Calu3 (cell line): ENCODE measurements at regions of chr20 and their contacts with region 1.

Region 1: DNA sequence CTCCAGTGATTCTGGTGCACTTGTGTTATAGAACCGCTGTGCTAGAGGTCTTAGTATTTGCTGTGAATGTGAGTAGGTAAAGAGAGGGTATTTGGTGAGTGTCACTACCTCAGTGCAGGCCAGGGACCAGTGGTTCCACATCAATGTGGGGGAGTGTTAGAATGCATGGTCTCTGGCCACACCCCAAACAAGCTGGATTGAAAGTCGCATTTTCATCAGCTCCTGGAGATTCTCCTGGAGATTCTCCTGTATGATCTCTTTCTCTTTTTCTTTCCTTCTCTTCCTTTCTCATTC is 26.8 kb upstream of the BCAS1 start:
- DNase-seq: no peak
- H3K4me3 Mint-ChIP-seq: no peak overlapping the region
- H3K27ac Mint-ChIP-seq: no peak overlapping the region
- H3K4me1 Mint-ChIP-seq: peaks cover 37% of the 10 kb centered on the region
- H3K27me3 Mint-ChIP-seq: no peaks in the 10 kb centered on the region
- CTCF ChIP-seq: no peak

Region 2: DNA sequence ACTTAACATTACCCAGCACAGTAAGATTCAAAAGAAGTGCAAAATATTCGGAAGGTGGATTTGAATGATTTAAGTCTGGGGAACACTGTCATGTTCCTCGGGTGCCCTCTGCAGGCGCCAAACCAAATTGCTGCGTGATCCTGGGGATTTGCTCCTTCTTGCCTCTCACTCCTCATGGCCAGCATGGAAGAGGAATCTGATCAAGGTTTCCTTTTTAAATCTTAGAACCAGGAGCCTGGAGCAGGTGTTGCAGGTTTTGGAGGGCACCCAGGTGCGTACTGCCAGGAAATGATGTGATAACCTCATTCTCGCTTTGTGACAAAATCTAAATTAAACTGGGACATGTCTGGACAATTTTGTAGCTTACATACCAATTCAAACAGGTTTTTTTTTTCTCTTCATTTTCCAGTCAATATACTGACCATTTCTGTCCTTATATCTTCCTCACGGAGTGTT is 102.6 kb after region 1 on chr20:
- CTCF ChIA-PET with region 1: interaction called, 36 read pairs
- intact Hi-C with region 1: loop called (anchors 1 kb)
- DNase-seq: peak; percentile 92
- H3K4me3 Mint-ChIP-seq: no peak overlapping the region
- H3K27ac Mint-ChIP-seq: no peak overlapping the region
- H3K4me1 Mint-ChIP-seq: peaks cover 67% of the 10 kb centered on the region
- H3K27me3 Mint-ChIP-seq: no peaks in the 10 kb centered on the region
- CTCF ChIP-seq: peak; percentile 93

Region 3: DNA sequence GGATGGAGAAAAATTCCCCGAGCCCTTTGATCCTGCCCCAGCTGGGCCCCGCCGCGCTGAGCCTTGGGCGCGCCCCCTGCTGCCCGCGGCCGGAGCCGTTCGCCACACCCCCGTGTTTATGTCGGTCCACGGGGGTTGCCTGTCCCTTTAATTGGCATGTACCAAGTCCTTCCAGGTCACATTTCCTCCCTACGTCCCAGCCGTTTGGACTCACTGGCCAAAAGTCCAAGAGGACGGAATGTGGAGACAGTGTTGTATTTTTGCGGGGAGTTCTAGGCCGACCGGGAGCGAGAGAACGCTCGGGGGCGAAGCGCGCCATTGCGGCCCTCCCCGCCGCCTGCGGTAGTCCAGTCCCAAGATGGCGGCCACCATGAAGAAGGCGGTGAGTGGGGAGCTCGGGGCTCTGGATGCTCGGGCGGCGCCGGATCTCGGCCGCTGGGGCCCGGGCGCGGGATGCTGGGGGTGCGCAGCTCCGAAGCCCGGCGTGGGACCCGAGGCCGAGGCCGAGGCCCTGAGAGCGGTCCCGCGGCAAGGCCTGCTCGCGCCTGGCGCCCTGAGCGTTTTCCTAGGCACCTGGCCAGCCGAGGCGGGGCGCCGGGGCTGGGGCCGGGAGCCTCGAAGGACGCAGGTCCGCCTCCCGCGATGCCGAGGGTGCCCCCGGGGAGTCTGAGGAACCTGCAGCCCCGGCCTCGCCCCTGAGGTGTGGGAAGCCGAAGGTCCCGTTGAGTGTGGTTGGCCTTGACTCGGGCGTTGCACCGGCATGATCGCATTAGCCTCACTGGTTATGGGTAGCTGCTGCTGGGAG is 110.8 kb after region 1 on chr20 and contains the start of gene PFDN4:
- CTCF ChIA-PET with region 1: interaction called, 11 read pairs
- intact Hi-C with region 1: no loop called
- DNase-seq: peak; percentile 97
- H3K4me3 Mint-ChIP-seq: peak within 1 kb of the TSS; percentile 69
- H3K27ac Mint-ChIP-seq: peak within 1 kb of the TSS; percentile 99
- H3K4me1 Mint-ChIP-seq: peaks cover 18% of the 10 kb centered on the region
- H3K27me3 Mint-ChIP-seq: no peaks in the 10 kb centered on the region
- CTCF ChIP-seq: peak; percentile 94
- total RNA-seq, gene PFDN4: 61.8 TPM in 2 replicates